Activated naive CD8-positive, alpha-beta T cell treated with anti-CD3 and anti-CD28 coated beads, Interleukin-2, amount 10 ng/mL, durations not matched to agents 7 days and 5 days (primary cell): ENCODE measurements at regions of chr12 and their contacts with region 1.

Region 1: DNA sequence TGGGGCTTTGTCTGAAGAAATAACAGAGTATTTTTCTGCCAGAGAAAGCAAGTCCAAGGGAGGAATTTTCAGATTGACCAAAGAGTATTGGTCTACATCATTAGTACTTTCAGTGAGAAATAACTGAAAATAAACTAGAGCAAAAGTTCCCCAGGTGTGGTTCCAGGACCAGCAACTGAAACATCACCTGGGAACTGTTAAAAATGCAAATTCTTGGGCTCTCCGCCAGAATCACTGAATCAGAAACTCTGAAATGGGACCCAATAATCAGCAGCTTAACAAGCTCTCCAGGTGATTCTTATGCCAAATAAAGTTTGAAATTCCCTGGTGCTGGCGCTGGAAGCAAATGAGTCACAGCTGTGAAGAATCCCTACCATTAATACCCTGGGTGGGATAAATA is 52.1 kb downstream of the EIF2S3B start:
- DNase-seq: no peak
- ATAC-seq: no peak
- H3K4me3 Mint-ChIP-seq: peak overlapping the region; percentile 88
- H3K27ac Mint-ChIP-seq: peak overlapping the region; percentile 91
- H3K4me1 Mint-ChIP-seq: peaks cover 46% of the 10 kb centered on the region
- H3K27me3 Mint-ChIP-seq: no peaks in the 10 kb centered on the region

Region 2: DNA sequence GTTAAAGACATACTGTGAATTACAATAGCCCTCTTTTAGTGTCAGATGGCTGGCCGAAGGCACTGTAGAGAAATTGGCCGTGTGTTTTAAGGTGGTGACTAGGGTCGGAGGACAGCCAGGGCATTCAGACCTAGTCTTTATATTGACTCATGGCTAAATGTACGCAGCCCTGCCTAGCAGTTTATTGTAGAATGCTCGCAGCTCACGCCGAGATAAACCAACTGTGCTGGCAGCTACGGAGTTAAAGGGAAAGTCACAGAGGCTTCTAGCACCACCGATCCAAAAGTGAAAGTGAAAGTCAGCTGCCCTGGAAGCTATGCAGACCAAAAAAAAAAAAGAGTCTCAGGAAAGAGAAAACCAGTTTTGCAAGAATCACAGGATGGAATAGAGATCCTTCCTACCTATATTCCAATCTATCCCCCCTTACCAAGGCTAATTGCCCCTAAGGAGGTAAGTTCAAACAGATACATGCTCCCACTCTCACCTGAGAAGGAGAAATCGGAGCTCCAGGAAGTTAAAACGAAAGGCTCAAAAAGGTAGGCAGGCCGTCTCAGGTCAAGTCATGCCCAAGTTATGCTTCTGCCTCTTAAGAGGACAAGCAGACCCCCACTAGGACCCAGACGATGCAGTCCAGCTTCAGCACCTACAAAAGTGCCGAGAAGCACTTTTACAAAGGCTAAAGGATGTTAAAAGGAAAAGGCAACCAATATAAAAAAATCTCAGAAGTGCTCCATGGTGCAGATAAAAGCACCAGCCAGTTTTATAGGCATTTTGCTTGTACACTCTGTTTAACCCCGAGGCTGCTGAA is 192.7 kb before region 1 on chr12:
- POLR2A ChIA-PET with region 1: interaction called, 42 read pairs
- DNase-seq: peak; percentile 60
- ATAC-seq: peak; percentile 59
- H3K4me3 Mint-ChIP-seq: no peak overlapping the region
- H3K27ac Mint-ChIP-seq: no peak overlapping the region
- H3K4me1 Mint-ChIP-seq: peaks cover 36% of the 10 kb centered on the region
- H3K27me3 Mint-ChIP-seq: no peaks in the 10 kb centered on the region

Region 3: GRCh38 chr12:10385166-10385613 is 172.6 kb before region 1 on chr12:
- POLR2A ChIA-PET with region 1: interaction called, 117 read pairs
- DNase-seq: no peak
- ATAC-seq: peak; percentile 43
- H3K4me3 Mint-ChIP-seq: peak overlapping the region; percentile 84
- H3K27ac Mint-ChIP-seq: peak overlapping the region; percentile 88
- H3K4me1 Mint-ChIP-seq: peaks cover 61% of the 10 kb centered on the region
- H3K27me3 Mint-ChIP-seq: no peaks in the 10 kb centered on the region

Region 4: DNA sequence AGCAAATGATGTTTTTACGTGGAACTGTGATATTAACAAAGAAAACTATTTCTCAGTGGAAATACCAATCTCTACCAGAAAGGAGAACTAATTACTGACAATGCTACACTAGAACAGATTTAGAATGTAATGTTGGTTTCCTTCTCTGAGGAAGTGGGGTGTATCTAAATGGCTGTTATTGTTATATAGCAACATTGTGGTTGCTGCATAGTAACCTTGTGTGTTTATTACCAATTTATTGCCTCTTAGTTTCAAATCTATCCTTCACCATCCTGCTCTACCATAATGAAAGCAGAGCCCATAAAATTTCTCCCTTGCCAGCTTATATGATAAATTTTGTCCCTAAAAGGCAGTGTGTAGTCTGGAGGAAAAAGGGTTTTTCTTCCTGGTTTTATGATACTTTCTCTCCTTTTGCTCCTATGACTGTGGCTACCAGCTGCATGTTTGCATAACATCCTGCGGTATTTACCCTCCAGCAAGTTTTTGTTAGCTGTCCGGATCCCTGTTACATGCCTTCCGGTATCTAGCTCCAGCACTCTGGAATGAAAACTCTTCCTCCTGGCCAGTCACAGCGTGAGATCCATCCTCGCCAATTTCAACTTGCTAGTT is 162.3 kb before region 1 on chr12:
- POLR2A ChIA-PET with region 1: interaction called, 117 read pairs
- DNase-seq: peak; percentile 35
- ATAC-seq: peak; percentile 55
- H3K4me3 Mint-ChIP-seq: peak overlapping the region; percentile 69
- H3K27ac Mint-ChIP-seq: peak overlapping the region; percentile 94
- H3K4me1 Mint-ChIP-seq: peaks cover 60% of the 10 kb centered on the region
- H3K27me3 Mint-ChIP-seq: no peaks in the 10 kb centered on the region

Region 5: GRCh38 chr12:10406725-10407124 is 151.0 kb before region 1 on chr12:
- POLR2A ChIA-PET with region 1: interaction called, 13 read pairs
- DNase-seq: peak; percentile 39
- ATAC-seq: peak; percentile 7
- H3K4me3 Mint-ChIP-seq: peak overlapping the region; percentile 91
- H3K27ac Mint-ChIP-seq: peak overlapping the region; percentile 87
- H3K4me1 Mint-ChIP-seq: peaks cover 40% of the 10 kb centered on the region
- H3K27me3 Mint-ChIP-seq: no peaks in the 10 kb centered on the region

Region 6: GRCh38 chr12:10497602-10498001 is 60.2 kb before region 1 on chr12:
- POLR2A ChIA-PET with region 1: interaction called, 11 read pairs
- DNase-seq: peak; percentile 63
- ATAC-seq: peak; percentile 98
- H3K4me3 Mint-ChIP-seq: peak overlapping the region; percentile 63
- H3K27ac Mint-ChIP-seq: peak overlapping the region; percentile 82
- H3K4me1 Mint-ChIP-seq: peaks cover 34% of the 10 kb centered on the region
- H3K27me3 Mint-ChIP-seq: no peaks in the 10 kb centered on the region

Region 7: GRCh38 chr12:10571141-10571540 is 13.4 kb after region 1 on chr12:
- POLR2A ChIA-PET with region 1: no interaction called
- DNase-seq: no peak
- ATAC-seq: no peak
- H3K4me3 Mint-ChIP-seq: no peak overlapping the region
- H3K27ac Mint-ChIP-seq: no peak overlapping the region
- H3K4me1 Mint-ChIP-seq: peaks cover 18% of the 10 kb centered on the region
- H3K27me3 Mint-ChIP-seq: no peaks in the 10 kb centered on the region

Region 8: DNA sequence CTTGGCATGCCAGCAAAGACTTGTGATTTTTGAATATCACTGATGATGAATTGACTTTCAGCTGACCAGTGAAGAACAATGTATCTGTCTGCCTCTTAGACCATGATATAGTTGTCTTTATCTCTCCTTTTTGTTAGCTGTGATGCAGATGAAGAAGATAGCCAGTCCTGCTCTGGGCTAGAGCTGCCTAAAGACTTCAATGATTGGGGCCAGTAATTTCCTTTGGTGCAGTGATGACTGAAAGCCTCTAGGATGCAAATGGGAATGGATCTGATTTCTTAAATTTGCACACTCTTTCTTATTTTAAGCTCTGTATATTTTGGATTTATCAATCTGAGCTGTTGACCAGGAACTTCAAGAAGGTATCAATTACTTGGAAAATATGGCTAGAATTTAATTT is 252.3 kb after region 1 on chr12 and contains the start of gene TAS2R9:
- POLR2A ChIA-PET with region 1: no interaction called
- DNase-seq: no peak
- ATAC-seq: no peak
- H3K4me3 Mint-ChIP-seq: no peak within 1 kb of the TSS
- H3K27ac Mint-ChIP-seq: no peak within 1 kb of the TSS
- H3K4me1 Mint-ChIP-seq: peaks cover 7% of the 10 kb centered on the region
- H3K27me3 Mint-ChIP-seq: peaks cover 44% of the 10 kb centered on the region
- total RNA-seq, gene TAS2R9: 0.28 TPM in 1 of 2 experiments, not detected in the other